Left cardiac atrium (tissue), 4 donors: ENCODE measurements at regions of chr6 and their contacts with region 1.

Region 1: GRCh38 chr6:53171605-53172446 is 23.2 kb upstream of the GCM1 start:
- DNase-seq: peak; percentile 87
- ATAC-seq: peak; percentile 91 to 94

Region 2: DNA sequence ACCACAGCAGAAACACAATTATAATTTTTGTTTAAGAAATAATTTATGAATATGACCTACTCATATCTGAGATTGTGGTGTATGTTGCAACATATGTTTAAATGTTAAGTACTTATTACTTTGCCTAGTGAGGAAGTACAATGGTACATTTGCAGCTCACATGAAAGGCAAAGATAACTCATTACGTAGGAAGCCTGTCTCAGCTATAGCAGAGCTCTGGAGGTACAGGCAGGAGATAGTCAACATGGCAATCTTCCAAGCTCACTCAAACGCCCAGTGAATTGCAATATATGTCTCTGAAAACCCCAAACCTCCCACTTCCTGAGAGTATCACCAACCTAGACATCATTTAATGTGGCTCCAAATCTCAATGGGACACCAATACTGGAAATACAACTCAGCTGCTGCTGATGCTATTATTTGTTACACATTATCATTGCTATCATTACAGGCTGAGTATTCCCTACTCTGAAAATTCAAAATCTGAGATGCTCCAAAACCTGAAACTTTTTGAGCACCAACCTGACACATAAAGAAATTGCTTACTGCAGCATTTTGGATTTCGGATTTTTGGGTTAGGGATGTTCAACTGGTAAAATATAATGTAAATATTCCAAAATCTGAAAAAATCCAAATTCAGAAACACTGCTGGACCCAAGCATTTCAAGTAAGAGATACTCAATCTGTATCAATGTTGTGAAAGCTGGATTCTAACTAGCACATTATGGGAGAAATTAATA is 151.7 kb before region 1 on chr6:
- intact Hi-C with region 1: no loop called
- DNase-seq: no peak
- ATAC-seq: no peak

Region 3: GRCh38 chr6:53410508-53411258 is 238.9 kb after region 1 on chr6:
- intact Hi-C with region 1: loop called (anchors 2 to 5 kb)
- DNase-seq: peak; percentile 62
- ATAC-seq: peak; percentile 84 to 90

Region 4: GRCh38 chr6:53484476-53485280 is 312.9 kb after region 1 on chr6:
- intact Hi-C with region 1: loop called (anchors 2 to 5 kb)
- DNase-seq: peak; percentile 63
- ATAC-seq: peak; percentile 75 to 78

Region 5: GRCh38 chr6:53581173-53581773 is 409.4 kb after region 1 on chr6:
- intact Hi-C with region 1: no loop called
- DNase-seq: no peak
- ATAC-seq: peak in 1 of 2 donors; percentile 75

Region 6: DNA sequence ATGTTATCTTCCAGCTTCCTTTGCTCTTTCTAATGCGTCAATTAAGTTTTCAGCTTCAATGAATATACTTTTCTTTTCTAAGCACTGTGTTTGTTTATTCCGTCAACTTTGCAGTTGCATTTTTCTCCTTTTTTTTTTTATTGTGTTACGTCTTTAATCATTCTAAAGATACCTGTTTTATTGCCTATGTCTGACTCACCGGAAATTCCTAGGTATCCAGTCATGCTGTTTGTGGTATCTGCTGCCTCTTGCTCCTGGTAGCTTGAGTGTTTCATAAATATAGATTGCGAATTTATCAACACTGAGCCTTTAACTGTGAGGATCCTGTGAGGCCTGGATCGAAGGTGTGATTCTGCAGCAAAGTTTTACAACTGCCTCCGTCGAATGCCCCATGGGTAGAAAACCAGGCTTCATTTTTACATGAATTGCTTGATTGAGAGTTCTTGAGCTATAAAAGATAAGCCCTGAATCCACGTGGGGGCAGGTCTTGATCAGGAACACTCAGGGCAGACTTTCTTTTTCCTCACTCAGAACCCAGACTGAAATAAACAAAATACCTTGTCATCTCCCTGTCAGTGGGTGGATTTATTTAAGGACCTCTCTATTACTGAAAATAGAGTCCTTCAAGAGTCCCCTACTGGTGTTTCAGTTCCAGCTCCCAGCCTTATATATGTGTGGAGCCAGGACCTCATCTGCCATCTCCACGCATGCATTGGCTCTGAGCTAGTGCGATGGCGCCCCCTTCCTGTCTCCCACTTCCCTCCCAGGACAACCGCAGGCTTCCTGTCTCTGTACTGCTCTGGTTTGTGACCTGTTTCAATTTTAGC is 562.9 kb after region 1 on chr6:
- intact Hi-C with region 1: loop called in 1 of 2 experiments (anchors 10 kb)
- DNase-seq: peak; percentile 24
- ATAC-seq: peak; percentile 63 to 85